ENCODE measurements at regions of chr10 and their contacts with region 1.

Region 1: GRCh38 chr10:34434119-34434594 is 380.9 kb downstream of the PARD3 start:
- DNase-seq: peak; percentile 9
- H3K4me3 ChIP-seq: no peak overlapping the region
- CTCF ChIP-seq: no peak

Region 2: GRCh38 chr10:34341473-34341872 is 92.7 kb before region 1 on chr10:
- in situ Hi-C with region 1: no loop called
- DNase-seq: no peak
- H3K4me3 ChIP-seq: no peak overlapping the region
- CTCF ChIP-seq: no peak

Region 3: GRCh38 chr10:34356463-34356862 is 77.7 kb before region 1 on chr10:
- in situ Hi-C with region 1: no loop called
- DNase-seq: no peak
- H3K4me3 ChIP-seq: no peak overlapping the region
- CTCF ChIP-seq: no peak

Region 4: GRCh38 chr10:34397324-34397723 is 36.8 kb before region 1 on chr10:
- in situ Hi-C with region 1: loop called (anchors 5 kb)
- DNase-seq: peak; percentile 40
- H3K4me3 ChIP-seq: no peak overlapping the region
- CTCF ChIP-seq: no peak

Region 5: GRCh38 chr10:34484164-34484563 is 50.0 kb after region 1 on chr10:
- in situ Hi-C with region 1: no loop called
- DNase-seq: no peak
- H3K4me3 ChIP-seq: no peak overlapping the region
- CTCF ChIP-seq: no peak

Region 6: GRCh38 chr10:34495938-34496337 is 61.8 kb after region 1 on chr10:
- in situ Hi-C with region 1: loop called (anchors 5 kb)
- DNase-seq: no peak
- H3K4me3 ChIP-seq: no peak overlapping the region
- CTCF ChIP-seq: no peak

Measured in astrocyte of the cerebellum (primary cell).